ENCODE measurements at regions of chr5 and their contacts with region 1.

Region 1: DNA sequence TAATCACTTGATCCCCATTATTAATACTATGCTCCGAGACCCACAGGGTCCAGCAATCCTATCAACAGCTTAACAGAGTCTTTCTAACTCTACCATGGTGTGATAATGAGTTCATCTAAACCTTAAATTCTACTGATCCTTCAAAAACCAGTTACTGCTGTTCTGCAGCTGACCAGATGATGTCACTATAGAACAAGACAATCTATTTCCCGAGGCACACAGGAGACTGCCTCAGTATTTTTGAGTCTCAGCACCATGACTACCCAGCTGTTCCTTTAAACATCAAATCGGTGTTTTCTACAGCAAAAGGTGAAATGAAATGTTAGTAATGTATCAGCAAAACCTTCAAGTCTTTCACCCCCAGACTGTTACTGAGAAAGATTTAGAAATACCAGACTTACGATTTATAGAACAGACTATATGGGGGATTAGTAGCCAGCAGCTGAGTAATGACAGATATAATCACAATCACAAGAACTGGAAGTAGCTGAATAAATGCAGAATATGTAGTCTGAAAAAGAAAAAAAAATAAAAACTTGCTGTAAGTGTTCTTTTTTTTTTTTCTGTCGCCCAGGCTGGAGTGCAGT is 16.9 kb downstream of the DNAJC18 start:
- DNase-seq: peak in 10 of 14 experiments; percentile 28 to 87 (median 50)
- ATAC-seq: peak; percentile 99
- H3K4me3 ChIP-seq: no peak overlapping the region
- H3K4me3 Mint-ChIP-seq: no peak overlapping the region
- H3K27ac ChIP-seq: no peak overlapping the region
- H3K27ac Mint-ChIP-seq: peak overlapping the region; percentile 3
- H3K4me1 ChIP-seq: peaks cover 2% of the 10 kb centered on the region
- H3K4me1 Mint-ChIP-seq: peaks cover 14% of the 10 kb centered on the region
- H3K27me3 ChIP-seq: no peaks in the 10 kb centered on the region
- H3K27me3 Mint-ChIP-seq: no peaks in the 10 kb centered on the region
- CTCF ChIP-seq: peak; percentile 93

Region 2: GRCh38 chr5:139439013-139439903 is 16.9 kb after region 1 on chr5 and contains the start of gene DNAJC18:
- CTCF ChIA-PET with region 1: interaction called, 29 read pairs
- POLR2A ChIA-PET with region 1: interaction called, 10 read pairs
- intact Hi-C with region 1: no loop called
- DNase-seq: peak; percentile 79 to 94 (median 88)
- ATAC-seq: peak; percentile 81
- H3K4me3 ChIP-seq: peak within 1 kb of the TSS; percentile 89
- H3K4me3 Mint-ChIP-seq: peak within 1 kb of the TSS; percentile 98
- H3K27ac ChIP-seq: peak within 1 kb of the TSS; percentile 95 to 99
- H3K27ac Mint-ChIP-seq: peak within 1 kb of the TSS; percentile 96
- H3K4me1 ChIP-seq: peaks cover 31% of the 10 kb centered on the region
- H3K4me1 Mint-ChIP-seq: peaks cover 51% of the 10 kb centered on the region
- H3K27me3 ChIP-seq: no peaks in the 10 kb centered on the region
- H3K27me3 Mint-ChIP-seq: no peaks in the 10 kb centered on the region
- CTCF ChIP-seq: no peak
- total RNA-seq, gene DNAJC18: 7.5 to 8.7 TPM

Region 3: DNA sequence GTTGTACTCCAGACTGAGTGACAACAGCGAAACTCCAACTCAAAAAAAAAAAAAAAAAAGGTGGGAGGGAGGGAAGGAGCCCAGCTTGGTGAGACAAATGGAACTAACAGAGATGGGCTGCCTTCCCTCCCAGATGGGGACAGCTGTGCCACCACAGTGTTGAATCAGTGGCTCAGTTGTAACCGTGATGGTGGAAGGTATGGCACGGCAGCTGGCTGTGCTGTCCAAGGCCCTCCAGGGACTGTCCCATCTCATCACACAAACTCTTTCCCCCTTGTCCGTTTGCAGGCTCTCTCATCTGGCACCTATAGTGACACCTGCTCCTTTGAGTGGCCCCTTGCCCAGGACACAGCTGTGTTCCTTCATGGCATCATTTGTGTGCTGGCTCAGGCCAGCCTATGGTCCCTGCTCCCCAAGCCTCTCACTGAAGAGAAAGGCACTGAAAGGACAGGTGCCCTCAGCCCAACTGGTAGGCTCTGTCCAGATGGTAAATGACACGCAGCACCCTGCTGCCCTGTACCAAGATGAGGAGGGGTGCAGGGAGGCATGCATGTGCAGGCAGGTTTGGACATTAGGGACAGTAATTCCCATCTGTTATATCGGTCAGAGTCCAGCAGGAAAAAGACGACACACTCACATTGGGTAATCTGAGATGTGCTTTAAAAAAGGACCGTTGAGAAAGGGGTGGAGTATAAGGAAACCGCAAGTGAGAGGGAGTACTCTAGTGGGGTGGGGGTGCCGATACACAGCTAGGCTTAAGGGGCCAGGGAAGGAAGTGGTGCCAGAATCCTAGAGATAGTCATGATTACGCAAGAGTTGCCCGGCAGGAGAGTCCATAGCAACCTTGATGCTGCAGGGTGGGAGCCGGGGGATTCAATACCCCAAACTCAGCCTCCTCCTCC is 52.7 kb after region 1 on chr5:
- CTCF ChIA-PET with region 1: interaction called, 20 read pairs
- POLR2A ChIA-PET with region 1: interaction called, 9 read pairs
- intact Hi-C with region 1: loop called in 1 of 2 experiments (anchors 5 kb)
- DNase-seq: peak in 5 of 14 experiments; percentile 24 to 75 (median 55)
- ATAC-seq: peak; percentile 65
- H3K4me3 ChIP-seq: peak overlapping the region; percentile 7
- H3K4me3 Mint-ChIP-seq: peak overlapping the region; percentile 81
- H3K27ac ChIP-seq: peak overlapping the region in 1 of 2 donors; percentile 32
- H3K27ac Mint-ChIP-seq: peak overlapping the region; percentile 92
- H3K4me1 ChIP-seq: peaks cover 98% of the 10 kb centered on the region
- H3K4me1 Mint-ChIP-seq: peaks cover 82% of the 10 kb centered on the region
- H3K27me3 ChIP-seq: no peaks in the 10 kb centered on the region
- H3K27me3 Mint-ChIP-seq: no peaks in the 10 kb centered on the region
- CTCF ChIP-seq: no peak

Region 4: GRCh38 chr5:139501381-139501780 is 79.0 kb after region 1 on chr5:
- CTCF ChIA-PET with region 1: interaction called, 11 read pairs
- POLR2A ChIA-PET with region 1: no interaction called
- intact Hi-C with region 1: no loop called
- DNase-seq: no peak
- ATAC-seq: no peak
- H3K4me3 ChIP-seq: no peak overlapping the region
- H3K4me3 Mint-ChIP-seq: no peak overlapping the region
- H3K27ac ChIP-seq: no peak overlapping the region
- H3K27ac Mint-ChIP-seq: no peak overlapping the region
- H3K4me1 ChIP-seq: no peaks in the 10 kb centered on the region
- H3K4me1 Mint-ChIP-seq: no peaks in the 10 kb centered on the region
- H3K27me3 ChIP-seq: no peaks in the 10 kb centered on the region
- H3K27me3 Mint-ChIP-seq: no peaks in the 10 kb centered on the region
- CTCF ChIP-seq: no peak

Region 5: DNA sequence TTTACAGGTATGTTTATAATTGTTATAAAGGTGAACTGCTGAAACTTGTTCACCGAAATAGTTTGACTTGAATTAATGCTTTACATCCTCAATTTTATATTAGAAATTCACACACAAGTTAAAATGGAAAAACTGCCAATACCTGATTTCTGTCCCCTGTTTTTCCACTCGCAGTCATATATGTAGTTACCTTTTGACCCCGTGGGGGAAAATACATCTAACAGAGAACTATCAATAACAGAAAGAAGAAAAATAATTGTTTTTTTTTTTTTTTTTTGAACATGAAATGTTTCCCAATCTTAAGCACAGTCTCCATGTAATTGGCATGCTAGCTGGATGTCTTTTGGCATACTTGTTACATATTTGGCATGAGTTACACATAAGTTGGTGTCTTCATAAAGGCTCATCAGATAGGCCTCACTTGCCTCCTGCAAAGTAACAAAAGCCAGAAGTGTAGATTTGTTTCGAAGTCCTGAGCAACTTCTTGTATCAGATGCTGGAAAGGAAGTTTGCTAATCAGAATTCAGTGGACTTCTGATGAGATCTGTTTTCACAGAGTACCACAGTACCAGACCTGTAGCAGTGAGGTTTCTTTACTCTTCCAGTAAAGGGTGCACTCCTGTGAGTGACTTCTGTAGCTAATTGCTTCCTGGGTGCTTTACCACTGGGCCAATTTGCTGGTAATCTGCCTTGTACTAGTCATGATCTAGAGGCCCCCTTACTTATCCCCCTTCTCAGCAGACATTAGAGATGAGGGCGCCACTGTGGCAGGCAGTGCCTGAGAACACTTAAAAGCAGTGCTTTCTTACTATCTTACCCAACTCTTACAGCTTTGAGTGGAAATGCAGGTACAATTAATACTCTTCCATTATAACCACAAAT is 189.5 kb after region 1 on chr5:
- CTCF ChIA-PET with region 1: interaction called, 5 read pairs
- POLR2A ChIA-PET with region 1: no interaction called
- intact Hi-C with region 1: loop called in 1 of 2 experiments (anchors 10 kb)
- DNase-seq: no peak
- ATAC-seq: peak; percentile 29
- H3K4me3 ChIP-seq: no peak overlapping the region
- H3K4me3 Mint-ChIP-seq: no peak overlapping the region
- H3K27ac ChIP-seq: no peak overlapping the region
- H3K27ac Mint-ChIP-seq: peak overlapping the region; percentile 73
- H3K4me1 ChIP-seq: peaks cover under 1% of the 10 kb centered on the region
- H3K4me1 Mint-ChIP-seq: peaks cover 39% of the 10 kb centered on the region
- H3K27me3 ChIP-seq: no peaks in the 10 kb centered on the region
- H3K27me3 Mint-ChIP-seq: no peaks in the 10 kb centered on the region
- CTCF ChIP-seq: no peak

Region 6: GRCh38 chr5:139765409-139766217 is 343.2 kb after region 1 on chr5:
- CTCF ChIA-PET with region 1: interaction called, 4 read pairs
- POLR2A ChIA-PET with region 1: no interaction called
- intact Hi-C with region 1: loop called in 1 of 2 experiments (anchors 5 kb)
- DNase-seq: peak; percentile 71 to 92 (median 78)
- ATAC-seq: peak; percentile 92
- H3K4me3 ChIP-seq: peak overlapping the region; percentile 60
- H3K4me3 Mint-ChIP-seq: peak overlapping the region; percentile 48
- H3K27ac ChIP-seq: no peak overlapping the region
- H3K27ac Mint-ChIP-seq: no peak overlapping the region
- H3K4me1 ChIP-seq: peaks cover 19% of the 10 kb centered on the region
- H3K4me1 Mint-ChIP-seq: peaks cover 9% of the 10 kb centered on the region
- H3K27me3 ChIP-seq: peaks cover 29 to 30% of the 10 kb centered on the region in 2 experiments
- H3K27me3 Mint-ChIP-seq: peaks cover 50% of the 10 kb centered on the region
- CTCF ChIP-seq: peak; percentile 100